Activated CD8-positive, alpha-beta T cell treated with anti-CD3 and anti-CD28 coated beads for 36 hours (primary cell): ENCODE measurements at regions of chr5 and their contacts with region 1.

Region 1: DNA sequence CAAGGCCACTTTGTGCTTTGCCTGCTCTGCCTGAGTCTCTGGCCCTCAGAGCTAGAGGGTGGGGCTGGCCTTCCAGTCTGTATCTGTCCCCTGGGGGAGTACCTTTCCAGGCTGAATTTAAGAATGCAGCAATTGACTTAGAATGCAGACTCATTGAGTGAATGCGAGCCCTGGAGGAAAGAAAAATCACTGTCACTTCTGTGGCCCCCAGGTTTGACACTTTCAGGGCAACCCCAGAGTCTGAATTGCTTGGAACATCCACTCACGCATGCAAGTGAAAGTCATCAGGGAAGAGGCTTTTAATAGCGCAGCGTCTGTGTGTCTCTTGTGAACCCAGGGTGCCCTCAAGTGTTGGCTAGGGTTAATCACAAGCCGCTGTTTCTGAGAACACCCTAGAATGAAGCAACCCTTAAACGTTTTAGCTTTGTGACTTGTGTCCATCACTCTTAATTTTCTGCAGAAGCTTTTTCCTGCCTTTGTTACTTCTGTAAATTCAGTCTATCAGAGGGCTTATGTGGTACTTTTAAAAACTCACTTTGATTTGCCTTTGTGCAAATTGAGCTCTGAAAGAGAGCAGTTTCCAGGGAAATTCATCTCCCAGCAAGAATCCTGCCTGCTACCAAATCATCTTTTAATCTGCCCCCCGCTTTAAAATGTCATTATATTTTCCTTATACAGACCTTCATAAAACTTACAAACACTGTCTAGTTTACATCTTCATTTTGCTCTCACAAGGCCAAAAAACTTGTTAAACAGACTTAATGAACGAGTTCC is 146.8 kb upstream of the IQGAP2 start:
- DNase-seq: peak; percentile 75
- ATAC-seq: peak; percentile 96
- H3K4me3 Mint-ChIP-seq: no peak overlapping the region
- H3K27ac Mint-ChIP-seq: no peak overlapping the region
- H3K4me1 Mint-ChIP-seq: peaks cover 7% of the 10 kb centered on the region
- H3K27me3 Mint-ChIP-seq: peaks cover 2% of the 10 kb centered on the region
- CTCF ChIP-seq: peak; percentile 83

Region 2: GRCh38 chr5:76074487-76075065 is 181.7 kb before region 1 on chr5:
- CTCF ChIA-PET with region 1: interaction called, 8 read pairs
- POLR2A ChIA-PET with region 1: no interaction called
- intact Hi-C with region 1: loop called (anchors 10 kb)
- DNase-seq: peak; percentile 46
- ATAC-seq: peak; percentile 69
- H3K4me3 Mint-ChIP-seq: no peak overlapping the region
- H3K27ac Mint-ChIP-seq: no peak overlapping the region
- H3K4me1 Mint-ChIP-seq: no peaks in the 10 kb centered on the region
- H3K27me3 Mint-ChIP-seq: peaks cover 57% of the 10 kb centered on the region
- CTCF ChIP-seq: peak; percentile 62

Region 3: DNA sequence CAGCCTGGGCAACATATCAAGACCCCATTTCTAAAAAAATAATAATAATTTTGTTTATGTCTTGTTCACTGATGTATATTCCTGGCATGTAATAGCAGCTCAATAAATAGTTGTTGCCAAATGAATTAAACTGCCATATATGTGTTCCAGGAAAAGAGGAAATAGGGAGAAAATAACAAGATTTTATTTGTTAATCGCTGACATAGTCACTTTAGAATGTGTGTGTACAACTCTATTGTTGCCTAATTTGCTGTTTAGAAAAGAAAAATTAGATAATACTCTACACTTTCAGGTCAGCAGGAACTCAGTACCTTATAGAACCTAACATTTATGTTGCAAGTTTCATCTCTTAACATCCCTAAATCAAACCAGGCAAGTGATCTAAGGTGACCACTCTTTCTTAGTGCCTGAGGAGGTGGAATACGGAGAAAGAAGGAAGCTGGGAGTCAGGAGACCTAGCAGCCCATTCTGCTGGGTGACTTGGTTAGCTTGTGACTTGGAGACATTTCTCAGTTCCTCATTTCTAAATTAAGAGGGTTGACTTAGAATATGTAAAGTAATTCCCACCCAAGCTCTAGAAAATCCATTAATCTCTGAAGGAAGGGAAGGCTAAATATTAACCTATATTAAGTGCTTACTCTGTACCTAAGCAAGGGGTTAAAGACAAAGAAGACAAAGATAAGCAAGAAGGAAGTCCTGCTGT is 36.5 kb after region 1 on chr5:
- CTCF ChIA-PET with region 1: no interaction called
- POLR2A ChIA-PET with region 1: no interaction called
- intact Hi-C with region 1: no loop called
- DNase-seq: no peak
- ATAC-seq: no peak
- H3K4me3 Mint-ChIP-seq: no peak overlapping the region
- H3K27ac Mint-ChIP-seq: no peak overlapping the region
- H3K4me1 Mint-ChIP-seq: peaks cover 2% of the 10 kb centered on the region
- H3K27me3 Mint-ChIP-seq: no peaks in the 10 kb centered on the region
- CTCF ChIP-seq: no peak